ENCODE measurements at regions of chr6 and their contacts with region 1.

Region 1: DNA sequence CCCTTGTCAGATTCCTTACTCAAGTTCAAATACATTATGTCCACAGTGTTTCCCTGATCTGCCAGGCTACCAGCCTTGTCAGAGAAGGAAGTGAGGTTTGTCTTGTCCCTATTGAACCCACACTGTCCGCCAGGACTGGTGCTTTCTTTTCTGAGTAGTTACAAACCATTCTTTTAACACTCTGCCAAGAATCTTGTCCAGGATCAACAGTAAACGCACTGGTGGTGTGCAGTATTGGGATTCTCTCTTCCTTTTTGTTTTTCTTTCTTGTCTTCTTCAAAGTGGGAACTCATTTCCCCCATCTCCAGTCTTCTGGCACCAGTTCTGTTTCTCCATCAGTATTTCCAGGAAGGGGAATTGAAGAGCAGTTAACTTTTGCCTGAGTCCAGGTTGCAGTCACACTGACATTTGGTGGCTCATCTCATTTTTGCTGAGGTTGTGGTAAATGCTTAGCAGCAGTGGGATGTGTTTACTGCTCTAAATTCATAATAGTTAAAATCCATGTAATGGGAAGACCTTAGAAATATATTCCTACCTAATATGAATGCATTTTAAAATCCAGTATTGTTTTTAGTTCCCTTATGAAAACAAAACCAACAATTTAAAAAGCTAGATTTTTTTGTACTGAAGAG is 295.3 kb downstream of the PRL start:
- DNase-seq: no peak
- ATAC-seq: no peak
- H3K4me3 ChIP-seq: no peak overlapping the region
- H3K27ac ChIP-seq: no peak overlapping the region
- H3K4me1 ChIP-seq: peaks cover 12% of the 10 kb centered on the region
- H3K27me3 ChIP-seq: no peaks in the 10 kb centered on the region
- CTCF ChIP-seq: no peak
- POLR2A ChIP-seq: no peak
- RAD21 ChIP-seq: no peak

Region 2: GRCh38 chr6:21900730-21901129 is 100.8 kb before region 1 on chr6:
- CTCF ChIA-PET with region 1: no interaction called
- POLR2A ChIA-PET with region 1: no interaction called
- dilution Hi-C with region 1: no loop called
- in situ Hi-C with region 1: no loop called
- intact Hi-C with region 1: loop called (anchors 2 kb)
- DNase-seq: peak; percentile 90
- ATAC-seq: peak; percentile 78
- H3K4me3 ChIP-seq: no peak overlapping the region
- H3K27ac ChIP-seq: no peak overlapping the region
- H3K4me1 ChIP-seq: peaks cover 4% of the 10 kb centered on the region
- H3K27me3 ChIP-seq: no peaks in the 10 kb centered on the region
- CTCF ChIP-seq: no peak
- POLR2A ChIP-seq: no peak
- RAD21 ChIP-seq: peak; percentile 18; the same call in 1 of the 2 replicates

Region 3: DNA sequence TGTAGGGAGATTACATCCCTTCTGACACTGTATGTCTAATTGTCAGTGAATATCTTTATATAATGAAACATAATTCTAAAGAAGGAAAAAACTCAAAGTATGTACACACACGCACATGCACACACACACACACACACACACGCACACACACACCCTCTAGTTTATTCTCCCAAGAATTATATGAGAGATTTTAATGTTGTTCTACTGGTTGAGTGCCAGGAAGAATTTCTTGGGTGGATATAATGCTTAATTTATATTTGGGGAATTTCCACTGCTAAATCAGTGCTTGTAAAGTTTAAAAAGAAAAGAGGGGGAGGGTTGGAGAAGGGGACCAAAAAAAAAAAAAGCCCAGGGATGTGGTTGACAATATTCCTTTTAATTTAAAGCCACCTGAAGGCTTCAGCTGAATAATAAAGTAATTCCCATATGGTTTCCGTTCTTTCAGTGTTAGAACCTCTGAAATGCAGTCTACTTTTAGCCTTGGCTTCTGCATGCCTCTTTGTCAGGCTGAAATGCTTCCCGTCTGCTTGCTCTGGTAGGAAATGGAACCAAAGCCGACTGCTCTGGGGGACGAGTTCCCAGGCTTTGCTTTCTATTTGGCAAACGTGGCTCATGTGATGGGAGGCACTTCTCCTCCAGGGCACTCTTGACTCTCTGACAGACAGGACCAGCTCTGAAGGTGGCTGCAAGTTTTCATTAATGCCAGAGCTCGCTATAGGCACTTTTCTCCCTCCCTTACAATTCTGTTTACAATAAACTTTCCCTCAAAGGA is 69.9 kb after region 1 on chr6:
- CTCF ChIA-PET with region 1: no interaction called
- POLR2A ChIA-PET with region 1: no interaction called
- dilution Hi-C with region 1: no loop called
- in situ Hi-C with region 1: no loop called
- intact Hi-C with region 1: no loop called
- DNase-seq: peak; percentile 66
- ATAC-seq: peak; percentile 80
- H3K4me3 ChIP-seq: peak overlapping the region; percentile 27
- H3K27ac ChIP-seq: peak overlapping the region; percentile 87
- H3K4me1 ChIP-seq: peaks cover 7% of the 10 kb centered on the region; the same call in 1 of the 2 replicates
- H3K27me3 ChIP-seq: no peaks in the 10 kb centered on the region
- CTCF ChIP-seq: no peak
- POLR2A ChIP-seq: no peak
- RAD21 ChIP-seq: no peak

Measured in IMR-90 (cell line).